ENCODE measurements at regions of chr10 and their contacts with region 1.

Region 1: GRCh38 chr10:21495752-21496342 is 29.6 kb downstream of the SKIDA1 start:
- DNase-seq: peak; percentile 95

Region 2: DNA sequence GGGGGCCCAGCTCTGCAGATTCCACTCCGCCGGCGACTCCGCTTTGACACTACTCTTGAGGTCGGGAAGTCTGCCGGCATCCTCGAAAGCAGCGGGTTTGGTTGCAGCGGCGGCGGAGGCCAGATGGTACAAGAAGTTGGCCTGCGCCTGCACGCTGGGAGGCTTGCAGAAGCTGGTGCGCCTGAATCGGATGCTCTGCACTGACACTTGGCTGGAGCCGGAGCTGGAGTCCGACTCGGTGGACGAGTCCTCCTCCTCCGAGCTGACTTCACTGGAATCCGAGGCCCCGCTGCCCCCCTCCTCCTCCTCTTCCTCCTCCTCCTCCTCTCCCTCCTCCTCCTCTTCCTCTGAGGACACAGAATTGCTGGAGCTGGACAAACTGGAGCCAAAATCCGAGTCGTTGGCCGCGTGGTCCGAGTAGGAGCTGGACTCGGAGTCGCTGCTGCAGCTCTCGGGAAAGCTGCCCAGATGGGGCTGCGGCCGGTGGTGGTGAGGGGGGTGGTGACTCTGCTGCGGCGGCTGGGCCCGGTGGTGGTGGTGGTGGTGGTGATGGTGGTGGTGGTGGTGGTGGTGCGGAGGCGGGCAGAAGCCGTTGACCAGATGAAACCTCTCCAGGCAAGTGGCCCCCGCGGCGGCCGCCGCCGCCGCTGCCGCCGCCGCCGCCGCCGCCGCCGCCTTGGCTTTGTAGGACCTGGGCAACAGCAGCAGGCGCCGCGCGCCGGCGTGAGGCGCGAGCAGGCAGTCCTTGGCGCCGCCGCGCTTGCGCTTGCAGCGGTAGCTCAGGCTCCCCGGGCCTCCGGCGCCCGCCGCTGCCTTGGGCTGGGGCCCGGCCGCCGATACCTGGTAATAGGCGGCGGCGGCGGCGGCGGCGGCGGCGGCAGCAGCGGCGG is 20.6 kb after region 1 on chr10:
- CTCF ChIA-PET with region 1: interaction called, 4 read pairs
- POLR2A ChIA-PET with region 1: interaction called, 32 read pairs
- DNase-seq: no peak

Region 3: DNA sequence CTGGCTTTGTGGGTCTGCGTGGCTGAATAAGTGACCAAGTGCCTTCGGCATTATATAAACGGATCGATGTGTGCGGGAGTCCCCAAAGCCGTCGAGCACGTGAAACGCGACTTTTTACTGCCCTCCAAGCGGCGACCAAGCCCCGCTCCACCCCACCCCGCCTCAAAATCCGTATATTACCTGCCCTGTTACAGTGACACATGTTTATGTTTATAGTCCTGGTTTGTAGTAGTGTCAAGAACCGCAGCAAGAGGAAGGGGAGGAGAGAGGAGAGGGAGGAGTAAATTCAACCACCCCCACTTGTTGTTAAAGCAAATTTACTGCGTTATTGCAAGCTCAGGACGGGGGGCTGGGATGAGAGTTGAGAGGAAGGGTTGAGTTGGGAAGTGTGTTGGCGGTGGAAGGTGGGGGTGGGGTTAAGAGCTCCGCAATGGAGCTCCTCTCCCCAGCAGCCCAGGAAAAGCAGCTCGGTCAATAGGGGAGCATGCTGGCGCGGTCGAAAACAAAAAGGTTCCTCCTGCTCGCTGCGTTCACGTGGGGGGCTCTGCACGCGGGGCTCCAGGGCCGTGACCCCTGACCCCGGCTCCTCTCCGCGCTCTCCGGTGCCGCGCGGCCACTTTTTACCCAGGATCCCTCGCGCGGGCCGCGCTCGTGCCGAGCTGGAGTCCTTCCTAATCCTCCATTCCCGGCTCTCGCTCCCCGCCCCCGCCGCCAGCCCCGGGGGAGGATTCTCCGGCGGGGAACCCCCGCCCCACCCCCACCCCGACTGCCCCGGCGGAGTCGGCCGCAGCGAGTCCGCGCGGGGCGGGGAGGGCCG is 29.7 kb after region 1 on chr10 and contains the start of gene SKIDA1:
- CTCF ChIA-PET with region 1: interaction called, 3 read pairs
- POLR2A ChIA-PET with region 1: interaction called, 56 read pairs
- DNase-seq: peak; percentile 62

Region 4: GRCh38 chr10:21533467-21534279 is 37.8 kb after region 1 on chr10 and contains the start of gene MLLT10:
- CTCF ChIA-PET with region 1: no interaction called
- POLR2A ChIA-PET with region 1: interaction called, 13 read pairs
- DNase-seq: peak; percentile 88

Region 5: DNA sequence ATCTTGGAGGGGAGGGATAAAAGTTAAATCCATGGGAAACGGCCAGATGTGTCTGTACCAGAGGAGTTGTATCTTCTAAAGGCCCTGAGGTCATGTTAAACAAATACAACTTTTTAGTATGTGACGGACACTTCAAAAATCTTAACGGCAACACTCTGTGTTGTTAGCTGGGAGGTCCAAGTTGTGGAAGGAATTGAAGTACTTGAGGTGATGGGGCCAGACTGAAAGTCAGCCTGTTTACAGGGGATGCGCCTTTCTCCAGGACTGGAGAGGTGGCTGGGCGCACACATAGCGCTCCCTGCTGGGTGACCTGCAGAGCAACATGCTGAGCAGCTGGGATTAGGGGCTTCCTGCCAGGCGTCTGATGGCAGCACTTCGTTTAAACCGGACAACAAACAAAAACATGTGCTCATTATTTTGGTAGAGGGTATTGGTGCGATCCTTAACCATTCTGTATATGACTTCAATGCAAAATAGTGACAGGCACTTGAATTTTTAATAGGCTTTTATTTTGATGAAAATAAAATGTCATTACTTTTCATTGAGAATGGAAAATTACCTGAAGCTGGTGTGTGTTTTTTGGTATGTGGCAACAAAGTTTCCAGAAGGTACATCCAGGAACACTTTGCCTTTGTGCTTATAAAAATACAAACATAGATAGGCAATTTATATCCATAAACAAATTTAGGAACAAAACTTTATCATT is 236.4 kb after region 1 on chr10:
- CTCF ChIA-PET with region 1: interaction called, 21 read pairs
- POLR2A ChIA-PET with region 1: interaction called, 13 read pairs
- DNase-seq: peak; percentile 77

Measured in HEK293T (cell line).